Testis (tissue), 5 donors: ENCODE measurements at regions of chr18 and their contacts with region 1.

Region 1: DNA sequence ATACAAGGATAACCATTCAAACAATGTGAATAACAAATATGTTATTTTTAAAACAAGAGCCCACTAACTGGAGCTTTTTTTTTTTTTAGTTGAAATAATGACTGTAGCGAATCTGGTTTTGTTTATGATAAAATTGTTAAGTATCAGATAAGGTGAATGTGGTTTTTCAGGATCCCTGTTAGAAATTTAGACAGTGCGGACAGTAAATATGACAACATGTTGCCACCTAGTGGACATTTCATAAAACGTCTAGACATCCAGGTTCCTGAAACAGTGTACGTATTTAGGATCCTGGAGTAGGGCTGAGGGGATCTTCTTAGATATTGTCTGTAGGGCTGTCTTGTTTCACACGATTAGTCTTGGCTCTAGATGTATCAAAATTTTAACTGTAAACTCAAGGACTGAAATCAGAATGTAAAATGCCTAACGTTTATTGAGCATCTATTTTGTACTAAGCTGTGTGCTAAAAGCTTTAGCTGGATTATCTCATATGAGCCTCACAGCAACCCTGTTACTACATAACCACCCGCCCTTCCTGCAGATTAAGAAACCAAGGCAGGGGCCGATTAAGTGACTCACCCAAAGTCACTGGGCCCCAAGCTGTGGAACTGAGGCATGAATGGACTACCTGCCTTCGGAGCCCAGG is 23.9 kb upstream of the CCDC68 start:
- DNase-seq: no peak
- H3K4me3 ChIP-seq: no peak overlapping the region
- H3K27ac ChIP-seq: no peak overlapping the region
- H3K4me1 ChIP-seq: no peaks in the 10 kb centered on the region
- H3K27me3 ChIP-seq: no peaks in the 10 kb centered on the region
- CTCF ChIP-seq: peak; percentile 69 to 81 (median 79)
- POLR2A ChIP-seq: no peak

Region 2: GRCh38 chr18:54453996-54454395 is 529.2 kb before region 1 on chr18:
- intact Hi-C with region 1: loop called (anchors 10 kb)
- DNase-seq: no peak
- H3K4me3 ChIP-seq: no peak overlapping the region
- H3K27ac ChIP-seq: no peak overlapping the region
- H3K4me1 ChIP-seq: no peaks in the 10 kb centered on the region
- H3K27me3 ChIP-seq: no peaks in the 10 kb centered on the region
- CTCF ChIP-seq: no peak
- POLR2A ChIP-seq: no peak

Region 3: DNA sequence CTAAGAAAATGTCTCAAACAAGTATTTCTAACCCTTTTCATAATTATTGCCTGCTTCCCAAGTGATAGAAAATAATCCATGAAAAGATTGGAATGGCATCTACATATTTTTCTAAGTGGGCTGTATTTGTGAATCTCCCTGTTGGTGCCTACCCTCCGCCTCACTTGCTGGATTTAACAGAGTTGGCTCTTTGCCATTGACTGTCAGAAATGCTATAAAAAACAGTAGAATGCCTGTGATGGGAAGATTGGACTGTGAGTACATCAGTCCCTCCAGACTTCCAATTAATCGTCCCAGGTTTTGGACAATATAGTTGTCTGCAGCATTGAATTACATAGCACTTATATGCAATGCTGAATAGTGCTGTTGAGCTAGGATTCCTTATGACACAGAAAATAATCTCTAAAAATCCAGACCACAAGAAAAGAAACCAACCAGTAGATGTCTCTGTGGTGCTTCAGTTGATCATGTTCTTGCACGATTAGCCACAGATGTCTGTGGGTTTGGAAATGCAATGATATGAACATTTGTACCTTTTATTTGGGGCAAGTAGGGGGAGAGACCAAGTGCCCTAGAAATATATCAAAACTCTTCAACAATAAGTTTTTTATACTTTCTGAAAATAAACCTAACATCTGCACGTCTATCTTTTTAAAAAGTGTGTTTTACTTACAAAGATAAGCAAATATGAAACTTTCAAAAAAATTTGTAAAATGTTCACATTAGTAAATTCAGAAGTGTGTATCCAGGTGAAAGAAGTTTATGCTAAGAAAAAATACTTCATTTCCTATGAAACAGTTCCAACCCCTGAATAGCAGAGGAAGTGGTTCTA is 303.6 kb before region 1 on chr18:
- intact Hi-C with region 1: loop called (anchors 10 kb)
- DNase-seq: no peak
- H3K4me3 ChIP-seq: no peak overlapping the region
- H3K27ac ChIP-seq: no peak overlapping the region
- H3K4me1 ChIP-seq: no peaks in the 10 kb centered on the region
- H3K27me3 ChIP-seq: no peaks in the 10 kb centered on the region
- CTCF ChIP-seq: peak in 2 of 3 experiments; percentile 24 to 33
- POLR2A ChIP-seq: no peak